B cell (primary cell): ENCODE measurements at regions of chr2 and their contacts with region 1.

Region 1: DNA sequence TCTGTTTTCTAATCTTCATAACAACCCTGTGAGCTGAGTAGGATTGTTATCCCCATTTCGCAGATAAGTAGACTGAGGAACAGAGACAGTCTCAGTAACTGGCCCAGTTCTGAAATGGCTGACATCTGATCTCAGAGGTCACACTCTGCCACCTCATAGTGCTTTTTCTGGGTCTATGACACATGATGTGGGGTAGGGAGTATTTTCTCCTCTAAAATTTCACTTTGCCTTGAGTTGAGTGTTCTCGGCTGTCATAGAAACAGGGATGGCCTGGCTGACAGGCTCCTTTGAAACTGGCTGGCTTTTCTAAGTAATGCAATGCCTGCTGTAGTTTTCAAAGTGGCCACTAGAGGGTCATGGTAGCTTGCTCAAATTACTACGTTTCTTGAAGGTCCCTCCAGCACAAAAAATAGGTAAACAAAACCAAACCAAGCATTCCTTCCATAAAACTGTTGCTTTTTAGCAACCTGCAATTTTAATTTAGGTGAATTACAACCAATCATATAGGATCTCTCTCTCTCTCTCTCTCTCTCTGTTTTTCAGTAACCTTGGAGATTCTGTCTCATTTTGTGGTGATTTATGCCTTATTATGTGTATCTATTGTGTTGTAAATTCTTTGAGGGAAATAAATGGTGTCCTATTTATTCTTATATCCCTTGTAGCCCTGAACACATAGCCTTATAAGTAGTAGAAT is 84.2 kb upstream of the TTN start:
- DNase-seq: peak; percentile 72
- ATAC-seq: peak; percentile 61
- H3K4me3 ChIP-seq: no peak overlapping the region
- H3K4me3 Mint-ChIP-seq: no peak overlapping the region
- H3K27ac ChIP-seq: no peak overlapping the region
- H3K27ac Mint-ChIP-seq: no peak overlapping the region
- H3K4me1 ChIP-seq: no peaks in the 10 kb centered on the region
- H3K4me1 Mint-ChIP-seq: no peaks in the 10 kb centered on the region
- H3K27me3 ChIP-seq: no peaks in the 10 kb centered on the region
- H3K27me3 Mint-ChIP-seq: no peaks in the 10 kb centered on the region
- CTCF ChIP-seq: peak; percentile 98

Region 2: GRCh38 chr2:178874529-178875240 is 16.7 kb before region 1 on chr2:
- CTCF ChIA-PET with region 1: interaction called, 40 read pairs
- POLR2A ChIA-PET with region 1: no interaction called
- intact Hi-C with region 1: no loop called
- DNase-seq: no peak
- ATAC-seq: no peak
- H3K4me3 ChIP-seq: no peak overlapping the region
- H3K4me3 Mint-ChIP-seq: no peak overlapping the region
- H3K27ac ChIP-seq: no peak overlapping the region
- H3K27ac Mint-ChIP-seq: no peak overlapping the region
- H3K4me1 ChIP-seq: no peaks in the 10 kb centered on the region
- H3K4me1 Mint-ChIP-seq: no peaks in the 10 kb centered on the region
- H3K27me3 ChIP-seq: no peaks in the 10 kb centered on the region
- H3K27me3 Mint-ChIP-seq: no peaks in the 10 kb centered on the region
- CTCF ChIP-seq: no peak

Region 3: DNA sequence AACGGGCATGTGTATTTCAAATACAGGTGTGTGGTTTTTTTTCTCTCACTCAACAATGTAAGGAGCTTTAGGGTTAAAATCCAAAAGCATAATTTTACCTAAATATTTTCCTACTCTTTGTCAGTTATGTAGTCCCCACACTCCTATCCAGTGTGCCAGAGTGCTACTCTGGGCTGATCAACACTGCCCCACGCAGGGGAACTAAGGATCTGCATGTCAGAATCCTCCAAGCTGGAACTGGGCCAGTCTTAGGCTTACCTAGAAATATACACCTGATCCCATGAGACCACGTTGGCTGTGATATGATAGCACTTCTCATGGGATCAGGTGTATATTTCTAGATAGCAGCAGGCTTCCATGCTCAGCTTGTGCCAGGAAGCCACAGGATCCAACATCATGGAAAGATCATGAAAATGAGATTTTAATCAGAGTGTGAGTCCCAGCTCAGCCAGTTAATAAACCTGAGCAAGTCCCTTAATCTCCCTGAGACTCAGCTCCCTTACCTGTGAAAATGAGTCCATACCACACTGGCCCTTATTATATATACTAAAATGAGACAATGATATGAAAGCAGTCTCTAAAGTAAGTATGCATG is 128.8 kb after region 1 on chr2:
- CTCF ChIA-PET with region 1: interaction called, 25 read pairs
- POLR2A ChIA-PET with region 1: interaction called, 4 read pairs
- intact Hi-C with region 1: loop called (anchors 2 kb)
- DNase-seq: peak; percentile 60
- ATAC-seq: peak; percentile 68
- H3K4me3 ChIP-seq: no peak overlapping the region
- H3K4me3 Mint-ChIP-seq: no peak overlapping the region
- H3K27ac ChIP-seq: peak overlapping the region; percentile 0 to 12
- H3K27ac Mint-ChIP-seq: no peak overlapping the region
- H3K4me1 ChIP-seq: peaks cover 30 to 45% of the 10 kb centered on the region in 2 donors
- H3K4me1 Mint-ChIP-seq: peaks cover 52% of the 10 kb centered on the region
- H3K27me3 ChIP-seq: no peaks in the 10 kb centered on the region
- H3K27me3 Mint-ChIP-seq: no peaks in the 10 kb centered on the region
- CTCF ChIP-seq: peak; percentile 84

Region 4: GRCh38 chr2:179264368-179265081 is 373.1 kb after region 1 on chr2 and contains the start of gene SESTD1:
- CTCF ChIA-PET with region 1: no interaction called
- POLR2A ChIA-PET with region 1: no interaction called
- intact Hi-C with region 1: loop called (anchors 1 kb)
- DNase-seq: peak; percentile 83
- ATAC-seq: peak; percentile 79
- H3K4me3 ChIP-seq: peak within 1 kb of the TSS; percentile 62 to 96 (median 80)
- H3K4me3 Mint-ChIP-seq: peak within 1 kb of the TSS; percentile 92
- H3K27ac ChIP-seq: peak within 1 kb of the TSS; percentile 54 to 87
- H3K27ac Mint-ChIP-seq: peak within 1 kb of the TSS; percentile 91
- H3K4me1 ChIP-seq: peaks cover 24 to 45% of the 10 kb centered on the region in 2 donors
- H3K4me1 Mint-ChIP-seq: peaks cover 51% of the 10 kb centered on the region
- H3K27me3 ChIP-seq: no peaks in the 10 kb centered on the region
- H3K27me3 Mint-ChIP-seq: no peaks in the 10 kb centered on the region
- CTCF ChIP-seq: no peak
- total RNA-seq, gene SESTD1: 66.1 and 71.9 TPM in 2 replicates

Region 5: GRCh38 chr2:179751163-179751809 is 859.9 kb after region 1 on chr2:
- CTCF ChIA-PET with region 1: no interaction called
- POLR2A ChIA-PET with region 1: no interaction called
- intact Hi-C with region 1: loop called (anchors 5 kb)
- DNase-seq: peak; percentile 31
- ATAC-seq: no peak
- H3K4me3 ChIP-seq: no peak overlapping the region
- H3K4me3 Mint-ChIP-seq: no peak overlapping the region
- H3K27ac ChIP-seq: no peak overlapping the region
- H3K27ac Mint-ChIP-seq: no peak overlapping the region
- H3K4me1 ChIP-seq: no peaks in the 10 kb centered on the region
- H3K4me1 Mint-ChIP-seq: no peaks in the 10 kb centered on the region
- H3K27me3 ChIP-seq: peaks cover 0 to 2% (median 0%) of the 10 kb centered on the region in 4 experiments
- H3K27me3 Mint-ChIP-seq: peaks cover 6% of the 10 kb centered on the region
- CTCF ChIP-seq: peak; percentile 76